IMR-90 (cell line): ENCODE measurements at regions of chr11 and their contacts with region 1.

Region 1: DNA sequence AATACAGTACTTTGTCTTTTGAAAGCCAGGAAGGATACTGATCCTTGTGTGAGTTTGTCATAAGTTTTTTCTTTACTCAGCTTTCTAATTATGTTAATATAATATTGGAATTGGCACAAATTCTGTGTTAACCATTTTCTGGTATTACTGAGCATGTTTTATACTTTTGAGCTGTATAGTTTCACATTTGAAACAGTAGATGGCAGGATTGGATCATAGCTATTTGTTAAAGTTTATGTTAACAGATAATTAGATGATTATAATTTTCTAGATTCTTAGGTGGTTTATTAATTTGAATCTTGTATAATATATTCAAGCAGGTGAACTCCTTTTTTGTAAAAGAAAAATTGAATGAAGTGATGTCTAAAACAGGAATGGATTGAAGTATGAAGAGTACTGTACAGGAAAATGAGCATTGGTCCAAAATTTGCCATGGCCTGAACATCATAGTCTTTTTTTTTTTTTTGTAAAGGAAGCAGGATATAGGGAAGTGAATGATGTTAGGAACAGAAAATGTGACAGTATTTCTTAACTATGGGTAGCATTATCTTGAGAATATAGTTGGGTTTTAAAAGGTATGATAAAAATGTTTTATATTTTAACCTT is 102.0 kb downstream of the CYP2R1 start:
- DNase-seq: peak; percentile 28
- ATAC-seq: peak; percentile 56; the same call in 1 of the 2 replicates
- H3K4me3 ChIP-seq: no peak overlapping the region
- H3K27ac ChIP-seq: no peak overlapping the region
- H3K4me1 ChIP-seq: no peaks in the 10 kb centered on the region
- H3K27me3 ChIP-seq: no peaks in the 10 kb centered on the region
- CTCF ChIP-seq: peak; percentile 65
- POLR2A ChIP-seq: no peak
- RAD21 ChIP-seq: peak; percentile 58

Region 2: DNA sequence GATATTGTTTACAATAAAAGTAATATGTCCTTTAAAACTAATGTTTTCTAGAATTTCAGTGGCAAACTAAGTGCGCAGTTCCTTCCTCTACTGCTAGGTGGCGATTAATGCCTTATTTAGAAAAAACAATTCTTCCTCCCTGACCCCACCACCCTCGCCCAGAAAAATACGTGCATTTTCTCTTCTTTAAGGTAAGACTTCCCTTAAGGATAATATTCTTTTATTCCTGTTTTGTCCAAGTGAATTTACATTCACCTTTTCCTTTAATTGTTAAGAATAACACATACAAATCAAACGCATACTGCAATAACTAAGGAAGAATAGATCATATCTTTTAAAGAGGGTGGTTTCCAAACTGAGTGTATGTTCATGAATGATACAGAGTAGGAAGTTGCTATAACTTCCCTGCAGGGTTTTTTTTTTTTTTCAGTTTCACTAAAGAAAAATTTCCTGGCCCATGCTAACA is 252.8 kb before region 1 on chr11:
- CTCF ChIA-PET with region 1: no interaction called
- POLR2A ChIA-PET with region 1: no interaction called
- dilution Hi-C with region 1: no loop called
- in situ Hi-C with region 1: no loop called
- intact Hi-C with region 1: loop called (anchors 5 kb)
- DNase-seq: peak; percentile 15
- ATAC-seq: peak; percentile 86
- H3K4me3 ChIP-seq: no peak overlapping the region
- H3K27ac ChIP-seq: no peak overlapping the region
- H3K4me1 ChIP-seq: no peaks in the 10 kb centered on the region
- H3K27me3 ChIP-seq: peaks cover 5% of the 10 kb centered on the region
- CTCF ChIP-seq: peak; percentile 67
- POLR2A ChIP-seq: no peak
- RAD21 ChIP-seq: peak; percentile 56

Region 3: GRCh38 chr11:15006139-15006759 is 216.3 kb after region 1 on chr11:
- CTCF ChIA-PET with region 1: no interaction called
- POLR2A ChIA-PET with region 1: no interaction called
- dilution Hi-C with region 1: no loop called
- in situ Hi-C with region 1: no loop called
- intact Hi-C with region 1: loop called (anchors 5 kb)
- DNase-seq: peak; percentile 46
- ATAC-seq: no peak
- H3K4me3 ChIP-seq: no peak overlapping the region
- H3K27ac ChIP-seq: no peak overlapping the region
- H3K4me1 ChIP-seq: no peaks in the 10 kb centered on the region
- H3K27me3 ChIP-seq: no peaks in the 10 kb centered on the region
- CTCF ChIP-seq: peak; percentile 40
- POLR2A ChIP-seq: no peak
- RAD21 ChIP-seq: peak; percentile 51

Region 4: DNA sequence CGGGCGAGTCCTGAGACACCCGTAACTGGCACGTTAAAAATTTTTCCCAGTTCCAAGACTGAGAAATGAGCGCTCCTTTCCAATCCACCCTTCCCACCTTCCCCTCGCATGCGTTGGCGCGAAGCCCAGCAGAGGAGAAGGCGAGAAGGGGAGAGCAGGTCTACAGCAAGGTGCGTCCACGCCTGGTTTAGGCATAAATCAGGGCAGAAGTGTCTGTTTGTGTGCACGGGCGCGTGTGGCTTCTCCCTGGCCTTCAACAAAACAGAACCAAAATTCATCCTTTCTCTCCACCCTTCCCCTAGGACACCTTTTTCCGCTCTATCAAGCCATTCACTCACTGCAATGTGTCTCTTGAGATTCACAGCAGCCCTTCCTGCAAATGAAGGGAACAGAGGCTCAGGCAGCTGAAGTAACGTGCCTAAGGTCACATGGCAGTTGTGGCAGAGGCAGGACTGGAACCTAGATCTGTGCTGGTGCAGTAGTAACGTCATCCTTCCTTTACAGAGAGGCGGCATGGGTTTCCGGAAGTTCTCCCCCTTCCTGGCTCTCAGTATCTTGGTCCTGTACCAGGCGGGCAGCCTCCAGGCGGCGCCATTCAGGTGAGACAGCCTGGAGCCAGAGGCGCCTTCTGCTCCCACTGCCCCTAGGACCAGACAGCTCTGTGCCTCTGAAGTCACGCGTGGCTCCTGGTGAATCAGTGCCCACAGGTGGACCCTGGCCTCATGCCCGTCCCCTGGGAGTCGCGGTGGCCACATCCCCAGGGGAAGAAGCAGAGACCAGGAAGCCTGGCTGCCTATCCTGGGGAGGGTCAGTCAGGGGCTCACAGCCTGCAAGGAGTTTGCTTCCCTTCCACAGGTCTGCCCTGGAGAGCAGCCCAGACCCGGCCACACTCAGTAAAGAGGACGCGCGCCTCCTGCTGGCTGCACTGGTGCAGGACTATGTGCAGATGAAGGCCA is 284.5 kb after region 1 on chr11:
- CTCF ChIA-PET with region 1: no interaction called
- POLR2A ChIA-PET with region 1: no interaction called
- dilution Hi-C with region 1: no loop called
- in situ Hi-C with region 1: no loop called
- intact Hi-C with region 1: loop called (anchors 1 kb)
- DNase-seq: peak; percentile 51
- ATAC-seq: peak; percentile 89
- H3K4me3 ChIP-seq: no peak overlapping the region; the same call in 1 of the 2 replicates
- H3K27ac ChIP-seq: no peak overlapping the region
- H3K4me1 ChIP-seq: peaks cover 4% of the 10 kb centered on the region; the same call in 1 of the 2 replicates
- H3K27me3 ChIP-seq: peaks cover 47% of the 10 kb centered on the region
- CTCF ChIP-seq: peak; percentile 64
- POLR2A ChIP-seq: no peak
- RAD21 ChIP-seq: peak; percentile 64

Region 5: GRCh38 chr11:15208378-15209222 is 418.6 kb after region 1 on chr11:
- CTCF ChIA-PET with region 1: no interaction called
- POLR2A ChIA-PET with region 1: no interaction called
- dilution Hi-C with region 1: no loop called
- in situ Hi-C with region 1: no loop called
- intact Hi-C with region 1: loop called (anchors 1 kb)
- DNase-seq: peak; percentile 53
- ATAC-seq: peak; percentile 98
- H3K4me3 ChIP-seq: no peak overlapping the region
- H3K27ac ChIP-seq: no peak overlapping the region
- H3K4me1 ChIP-seq: no peaks in the 10 kb centered on the region
- H3K27me3 ChIP-seq: no peaks in the 10 kb centered on the region
- CTCF ChIP-seq: peak; percentile 95
- POLR2A ChIP-seq: peak; percentile 65
- RAD21 ChIP-seq: peak; percentile 99